Natural killer cell (primary cell): ENCODE measurements at regions of chr10 and their contacts with region 1.

Region 1: DNA sequence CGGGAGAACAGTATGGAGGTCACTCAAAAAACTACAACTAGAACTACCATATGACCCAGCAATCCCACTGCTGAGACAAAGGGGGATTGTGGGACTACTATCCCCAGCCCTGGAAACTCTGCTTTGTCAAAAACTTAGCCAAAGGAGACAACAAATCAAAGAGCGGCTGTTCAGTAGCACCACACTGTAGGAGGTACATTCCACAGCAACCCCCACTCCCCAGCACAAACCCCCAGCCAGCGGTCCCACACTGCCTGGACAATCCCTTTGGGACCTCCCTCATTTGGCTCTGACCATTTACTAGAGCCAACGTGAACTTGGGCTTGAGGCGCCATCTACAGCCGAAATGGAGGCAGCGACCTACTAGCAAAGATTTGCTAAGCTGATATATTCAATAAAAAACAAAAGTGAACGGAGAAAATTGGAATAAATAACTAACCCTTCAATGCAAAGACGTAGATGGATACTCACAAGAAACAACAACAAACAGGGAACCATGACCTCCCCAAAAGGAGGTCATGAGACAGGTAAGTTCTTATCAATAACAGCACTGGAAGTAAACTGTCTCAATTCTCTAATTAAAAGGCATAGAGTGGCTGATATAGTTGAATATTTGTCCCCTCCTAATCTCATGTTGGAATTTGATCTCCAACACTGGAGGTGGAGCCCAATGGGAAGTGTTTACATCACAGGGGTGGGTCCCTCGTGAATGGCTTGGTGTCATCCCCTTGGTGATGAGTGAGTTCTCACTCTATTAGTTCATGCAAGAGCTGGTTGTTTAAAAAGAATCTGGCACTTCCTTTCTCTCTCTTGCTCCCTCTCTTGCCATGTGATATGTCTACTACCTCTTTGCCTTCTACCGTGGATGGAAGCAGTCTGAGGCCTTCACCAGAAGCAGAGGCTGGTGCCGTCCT is 119.0 kb upstream of the KCNMA1 start:
- DNase-seq: peak in 1 of 2 donors; percentile 25
- ATAC-seq: no peak
- H3K4me3 ChIP-seq: no peak overlapping the region
- H3K4me3 Mint-ChIP-seq: no peak overlapping the region
- H3K27ac ChIP-seq: no peak overlapping the region
- H3K27ac Mint-ChIP-seq: no peak overlapping the region
- H3K4me1 ChIP-seq: no peaks in the 10 kb centered on the region
- H3K4me1 Mint-ChIP-seq: peaks cover 5 to 6% of the 10 kb centered on the region in 2 donors
- H3K27me3 ChIP-seq: peaks cover 3% of the 10 kb centered on the region
- H3K27me3 Mint-ChIP-seq: peaks cover 0 to 5% of the 10 kb centered on the region in 2 donors
- CTCF ChIP-seq: peak; percentile 15

Region 2: GRCh38 chr10:77718957-77719356 is 37.6 kb before region 1 on chr10:
- intact Hi-C with region 1: loop called (anchors 1 kb)
- DNase-seq: no peak
- ATAC-seq: no peak
- H3K4me3 ChIP-seq: no peak overlapping the region
- H3K4me3 Mint-ChIP-seq: no peak overlapping the region
- H3K27ac ChIP-seq: no peak overlapping the region
- H3K27ac Mint-ChIP-seq: no peak overlapping the region
- H3K4me1 ChIP-seq: no peaks in the 10 kb centered on the region
- H3K4me1 Mint-ChIP-seq: no peaks in the 10 kb centered on the region
- H3K27me3 ChIP-seq: no peaks in the 10 kb centered on the region
- H3K27me3 Mint-ChIP-seq: peaks cover 14% of the 10 kb centered on the region in 2 donors
- CTCF ChIP-seq: no peak